Endothelial cell of umbilical vein (primary cell): ENCODE measurements at regions of chr3 and their contacts with region 1.

Region 1: GRCh38 chr3:139937674-139938279 is 2.8 kb downstream of the CLSTN2 start:
- DNase-seq: peak; percentile 34
- H3K4me3 ChIP-seq: no peak overlapping the region
- H3K27ac ChIP-seq: no peak overlapping the region
- H3K4me1 ChIP-seq: no peaks in the 10 kb centered on the region
- H3K27me3 ChIP-seq: peaks cover 17 to 28% of the 10 kb centered on the region in 2 experiments
- CTCF ChIP-seq: peak; percentile 59
- POLR2A ChIP-seq: no peak

Region 2: GRCh38 chr3:139457066-139457465 is 480.7 kb before region 1 on chr3:
- CTCF ChIA-PET with region 1: no interaction called
- POLR2A ChIA-PET with region 1: no interaction called
- dilution Hi-C with region 1: no loop called
- intact Hi-C with region 1: no loop called
- DNase-seq: no peak
- H3K4me3 ChIP-seq: no peak overlapping the region
- H3K27ac ChIP-seq: no peak overlapping the region
- H3K4me1 ChIP-seq: no peaks in the 10 kb centered on the region
- H3K27me3 ChIP-seq: no peaks in the 10 kb centered on the region
- CTCF ChIP-seq: no peak
- POLR2A ChIP-seq: no peak

Region 3: DNA sequence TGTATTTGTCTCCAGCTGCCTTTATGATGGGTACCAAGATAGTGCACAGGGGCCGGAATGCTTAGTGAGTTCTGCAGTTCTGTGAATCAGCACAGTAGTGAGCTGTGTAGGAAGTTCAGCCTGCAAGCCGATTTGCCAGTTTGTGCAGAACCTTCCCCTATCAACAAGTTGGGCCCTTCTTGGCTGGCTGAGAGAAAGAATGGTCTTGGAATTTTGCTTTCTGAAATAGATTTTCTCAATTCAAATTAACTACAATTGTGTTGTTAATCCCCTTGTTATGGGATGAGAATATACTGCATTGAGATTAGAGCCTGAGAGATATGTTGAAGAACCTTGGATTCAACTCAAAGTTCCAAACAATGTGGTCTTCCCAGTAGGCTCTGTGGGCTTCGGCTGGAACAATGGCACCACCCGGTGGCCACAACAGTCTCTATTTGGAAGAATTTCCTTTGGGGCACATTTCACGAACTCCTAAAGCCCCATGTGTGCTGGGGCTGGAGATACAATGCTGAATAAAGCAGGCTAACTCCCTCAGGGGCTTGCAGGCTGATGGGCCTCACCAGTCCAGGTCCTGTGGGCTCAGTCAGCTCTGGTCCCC is 799.2 kb after region 1 on chr3:
- CTCF ChIA-PET with region 1: interaction called, 5 read pairs
- POLR2A ChIA-PET with region 1: no interaction called
- dilution Hi-C with region 1: no loop called
- intact Hi-C with region 1: loop called (anchors 2 kb)
- DNase-seq: peak; percentile 34
- H3K4me3 ChIP-seq: no peak overlapping the region
- H3K27ac ChIP-seq: no peak overlapping the region
- H3K4me1 ChIP-seq: no peaks in the 10 kb centered on the region
- H3K27me3 ChIP-seq: no peaks in the 10 kb centered on the region
- CTCF ChIP-seq: peak; percentile 15 to 27
- POLR2A ChIP-seq: no peak

Region 4: GRCh38 chr3:140863580-140864009 is 925.8 kb after region 1 on chr3:
- CTCF ChIA-PET with region 1: interaction called, 7 read pairs
- POLR2A ChIA-PET with region 1: no interaction called
- dilution Hi-C with region 1: no loop called
- intact Hi-C with region 1: loop called (anchors 1 kb)
- DNase-seq: peak; percentile 58
- H3K4me3 ChIP-seq: no peak overlapping the region
- H3K27ac ChIP-seq: no peak overlapping the region
- H3K4me1 ChIP-seq: no peaks in the 10 kb centered on the region
- H3K27me3 ChIP-seq: no peaks in the 10 kb centered on the region
- CTCF ChIP-seq: peak; percentile 9 to 39
- POLR2A ChIP-seq: no peak